ENCODE measurements at regions of chr4 and their contacts with region 1.

Region 1: DNA sequence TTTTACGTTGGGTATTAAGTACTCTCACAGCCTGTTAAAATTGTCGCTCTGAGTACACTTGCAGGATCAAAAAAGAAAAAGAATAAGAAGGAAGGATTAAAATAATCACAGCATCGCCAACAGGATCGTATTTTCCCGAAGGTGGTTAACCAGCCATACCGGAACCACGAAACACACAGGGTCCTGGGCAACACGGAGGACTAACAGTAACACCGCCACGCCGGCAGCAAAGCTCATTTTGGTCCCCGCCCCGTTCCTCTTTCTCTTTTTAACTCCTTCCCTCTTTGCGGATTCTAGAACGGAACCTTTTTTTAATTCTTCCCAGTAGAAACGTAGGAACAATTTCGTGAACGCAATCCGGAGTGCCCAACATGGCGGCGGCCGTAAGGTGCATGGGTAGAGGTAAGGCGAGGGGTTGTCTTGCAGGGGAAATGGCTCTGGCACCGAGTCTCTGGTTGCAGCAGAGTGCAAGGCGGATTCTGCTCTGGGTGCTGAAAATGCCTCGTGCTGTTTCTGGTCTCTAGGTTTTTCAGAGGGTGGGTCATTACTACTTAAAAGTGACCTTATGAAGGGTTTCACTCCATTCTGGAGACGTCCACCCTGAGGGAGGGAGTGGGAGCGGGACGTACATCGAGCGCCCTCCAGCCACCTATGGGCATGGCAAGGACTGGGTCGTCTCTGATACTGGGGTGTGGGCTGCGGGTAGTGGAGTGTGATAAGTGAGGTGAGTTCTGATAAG is at the start of gene MRPL1:
- DNase-seq: peak; percentile 86
- H3K4me3 Mint-ChIP-seq: peak within 1 kb of the TSS; percentile 93
- H3K27ac Mint-ChIP-seq: peak within 1 kb of the TSS; percentile 99
- H3K4me1 Mint-ChIP-seq: peaks cover 41% of the 10 kb centered on the region
- H3K27me3 Mint-ChIP-seq: no peaks in the 10 kb centered on the region
- total RNA-seq, gene MRPL1: 50.6 and 60.3 TPM in 2 replicates

Region 2: GRCh38 chr4:77629885-77630284 is 232.8 kb before region 1 on chr4:
- intact Hi-C with region 1: loop called (anchors 10 kb)
- DNase-seq: no peak
- H3K4me3 Mint-ChIP-seq: no peak overlapping the region
- H3K27ac Mint-ChIP-seq: peak overlapping the region; percentile 34
- H3K4me1 Mint-ChIP-seq: peaks cover 16% of the 10 kb centered on the region
- H3K27me3 Mint-ChIP-seq: peaks cover 2% of the 10 kb centered on the region

Region 3: DNA sequence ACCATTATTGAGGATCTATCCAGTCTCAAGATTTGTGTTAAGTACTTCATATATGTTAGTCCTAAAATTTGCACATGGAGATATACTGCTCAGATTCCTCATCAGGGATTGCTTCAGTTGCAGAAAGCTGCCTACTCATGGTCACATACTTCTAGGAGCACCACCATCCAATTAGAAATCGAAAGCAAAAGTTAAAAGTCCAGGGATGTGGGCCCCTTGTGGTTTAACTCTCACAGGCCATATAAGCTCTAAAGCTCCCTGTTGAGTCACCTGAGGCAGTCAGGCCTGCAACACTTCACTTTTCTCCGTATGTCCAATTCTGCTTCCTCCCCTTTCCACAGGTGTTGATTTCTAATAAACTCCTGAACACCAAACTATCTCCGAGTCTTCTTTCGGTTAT is 127.7 kb before region 1 on chr4:
- intact Hi-C with region 1: loop called (anchors 2 kb)
- DNase-seq: peak; percentile 50
- H3K4me3 Mint-ChIP-seq: peak overlapping the region; percentile 62
- H3K27ac Mint-ChIP-seq: peak overlapping the region; percentile 70
- H3K4me1 Mint-ChIP-seq: peaks cover 43% of the 10 kb centered on the region
- H3K27me3 Mint-ChIP-seq: no peaks in the 10 kb centered on the region

Region 4: GRCh38 chr4:77800483-77801259 is 62.0 kb before region 1 on chr4:
- intact Hi-C with region 1: loop called (anchors 5 kb)
- DNase-seq: no peak
- H3K4me3 Mint-ChIP-seq: peak overlapping the region; percentile 70
- H3K27ac Mint-ChIP-seq: peak overlapping the region; percentile 89
- H3K4me1 Mint-ChIP-seq: peaks cover 32% of the 10 kb centered on the region
- H3K27me3 Mint-ChIP-seq: no peaks in the 10 kb centered on the region

Region 5: DNA sequence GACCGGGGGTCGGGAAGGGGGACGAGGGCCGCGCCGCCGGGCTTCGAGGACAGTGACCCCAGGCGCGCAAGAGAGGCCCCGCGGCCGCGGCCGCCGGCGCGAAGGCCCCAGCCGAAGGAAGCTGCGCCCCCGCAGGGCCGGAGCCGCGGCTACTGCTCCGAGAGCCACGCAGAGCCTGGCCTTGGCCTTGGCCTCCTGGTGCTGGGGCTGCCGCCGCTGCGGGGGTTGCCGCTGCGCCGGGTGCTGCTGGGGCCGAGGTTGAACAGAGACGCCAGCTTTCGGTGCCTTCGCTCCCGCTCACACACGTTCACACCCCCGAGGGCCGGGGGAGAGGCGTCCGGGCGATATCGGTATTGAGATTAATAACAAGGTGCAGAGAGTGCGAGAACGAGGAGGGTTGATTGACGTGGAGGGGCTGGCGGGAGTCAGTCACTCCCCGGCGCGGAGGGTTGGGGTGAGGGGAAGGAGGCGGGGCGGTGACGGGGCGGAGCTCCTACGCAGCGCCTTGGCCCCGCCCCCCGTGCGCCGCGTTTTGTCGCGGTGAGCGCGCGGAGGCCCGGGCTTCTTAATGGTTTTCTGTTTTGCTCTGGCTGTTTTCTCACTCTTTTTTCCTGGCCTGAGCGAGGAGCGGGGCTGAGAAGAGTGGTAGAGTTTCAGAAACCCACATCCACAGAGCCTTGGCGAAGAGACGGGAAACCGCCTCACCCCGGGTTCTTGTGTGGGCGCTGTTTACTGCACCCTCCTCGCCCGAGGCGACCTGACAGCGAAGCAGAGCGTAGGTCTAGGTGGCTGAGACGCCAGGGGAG is 42.6 kb before region 1 on chr4:
- intact Hi-C with region 1: loop called (anchors 1 kb)
- DNase-seq: peak; percentile 92
- H3K4me3 Mint-ChIP-seq: peak overlapping the region; percentile 87
- H3K27ac Mint-ChIP-seq: peak overlapping the region; percentile 99
- H3K4me1 Mint-ChIP-seq: peaks cover 35% of the 10 kb centered on the region
- H3K27me3 Mint-ChIP-seq: no peaks in the 10 kb centered on the region

Region 6: GRCh38 chr4:77843628-77844027 is 19.0 kb before region 1 on chr4:
- intact Hi-C with region 1: loop called (anchors 1 kb)
- DNase-seq: no peak
- H3K4me3 Mint-ChIP-seq: no peak overlapping the region
- H3K27ac Mint-ChIP-seq: peak overlapping the region; percentile 81
- H3K4me1 Mint-ChIP-seq: peaks cover 23% of the 10 kb centered on the region
- H3K27me3 Mint-ChIP-seq: no peaks in the 10 kb centered on the region

Region 7: DNA sequence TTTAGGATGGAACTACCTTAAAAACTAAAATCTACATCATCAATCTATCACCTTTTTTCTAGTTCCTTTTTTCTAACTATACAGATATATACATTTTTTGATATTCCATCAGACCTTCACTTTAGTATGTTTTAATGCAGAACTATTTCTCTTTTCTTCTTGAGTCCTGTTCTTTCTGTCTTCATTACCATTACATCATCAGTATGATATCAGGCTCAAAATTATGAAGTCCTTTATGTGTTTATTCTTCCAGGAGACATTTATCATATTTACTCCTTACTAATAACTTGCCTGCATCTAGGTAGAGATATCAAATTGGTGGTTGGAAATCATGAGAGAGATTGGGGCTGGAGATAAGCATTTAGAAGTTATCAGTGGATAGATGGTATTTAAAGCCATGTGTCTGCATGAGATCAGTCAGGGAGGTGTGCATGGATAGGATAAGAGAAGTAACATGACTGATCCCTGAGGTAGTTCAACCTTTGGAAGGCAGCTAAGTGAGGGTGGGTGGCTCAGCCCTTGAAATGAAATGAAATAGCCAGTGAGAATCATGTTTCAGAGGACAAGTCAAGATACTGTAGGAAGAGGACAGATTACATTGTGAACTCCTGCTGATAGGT is 43.1 kb after region 1 on chr4:
- intact Hi-C with region 1: no loop called
- DNase-seq: no peak
- H3K4me3 Mint-ChIP-seq: no peak overlapping the region
- H3K27ac Mint-ChIP-seq: no peak overlapping the region
- H3K4me1 Mint-ChIP-seq: peaks cover 9% of the 10 kb centered on the region
- H3K27me3 Mint-ChIP-seq: no peaks in the 10 kb centered on the region

Region 8: GRCh38 chr4:78775303-78776030 is 912.8 kb after region 1 on chr4:
- intact Hi-C with region 1: loop called (anchors 5 kb)
- DNase-seq: peak; percentile 83
- H3K4me3 Mint-ChIP-seq: peak overlapping the region; percentile 93
- H3K27ac Mint-ChIP-seq: peak overlapping the region; percentile 96
- H3K4me1 Mint-ChIP-seq: peaks cover 32% of the 10 kb centered on the region
- H3K27me3 Mint-ChIP-seq: no peaks in the 10 kb centered on the region

Measured in activated T-helper 2 cell treated with anti-CD3 and anti-CD28 coated beads, Interferon-gamma antibody, Interleukin-2, Interleukin-4, amounts not matched to agents 10 μg/mL and 5 μg/mL and 100 μg/mL, durations not matched to agents 14 hours and 24 hours and 36 hours (primary cell).